Activated CD4-positive, alpha-beta T cell treated with anti-CD3 and anti-CD28 coated beads for 36 hours (primary cell): ENCODE measurements at regions of chr4 and their contacts with region 1.

Region 1: GRCh38 chr4:40662962-40663604 is 33.4 kb upstream of the RBM47 start:
- DNase-seq: peak; percentile 74
- ATAC-seq: peak; percentile 88
- H3K4me3 Mint-ChIP-seq: no peak overlapping the region
- H3K27ac Mint-ChIP-seq: peak overlapping the region; percentile 80
- H3K4me1 Mint-ChIP-seq: peaks cover 27% of the 10 kb centered on the region
- H3K27me3 Mint-ChIP-seq: no peaks in the 10 kb centered on the region

Region 2: GRCh38 chr4:40462326-40462725 is 200.8 kb before region 1 on chr4:
- CTCF ChIA-PET with region 1: no interaction called
- POLR2A ChIA-PET with region 1: no interaction called
- intact Hi-C with region 1: no loop called
- DNase-seq: peak; percentile 27
- ATAC-seq: peak; percentile 43
- H3K4me3 Mint-ChIP-seq: no peak overlapping the region
- H3K27ac Mint-ChIP-seq: no peak overlapping the region
- H3K4me1 Mint-ChIP-seq: peaks cover 14% of the 10 kb centered on the region
- H3K27me3 Mint-ChIP-seq: no peaks in the 10 kb centered on the region

Region 3: GRCh38 chr4:40629401-40630334 is 33.4 kb before region 1 on chr4 and contains the start of gene RBM47:
- CTCF ChIA-PET with region 1: no interaction called
- POLR2A ChIA-PET with region 1: interaction called, 3 read pairs
- intact Hi-C with region 1: loop called in 1 of 2 experiments (anchors 2 kb)
- DNase-seq: peak; percentile 63
- ATAC-seq: peak; percentile 72
- H3K4me3 Mint-ChIP-seq: peak within 1 kb of the TSS; percentile 73
- H3K27ac Mint-ChIP-seq: peak within 1 kb of the TSS; percentile 79
- H3K4me1 Mint-ChIP-seq: peaks cover 36% of the 10 kb centered on the region
- H3K27me3 Mint-ChIP-seq: peaks cover 24% of the 10 kb centered on the region
- total RNA-seq, gene RBM47: 3.2 to 4.4 TPM

Region 4: GRCh38 chr4:40687676-40688389 is 24.8 kb after region 1 on chr4:
- CTCF ChIA-PET with region 1: interaction called, 4 read pairs
- POLR2A ChIA-PET with region 1: interaction called, 4 read pairs
- intact Hi-C with region 1: loop called (anchors 1 kb)
- DNase-seq: no peak
- ATAC-seq: peak; percentile 18
- H3K4me3 Mint-ChIP-seq: no peak overlapping the region
- H3K27ac Mint-ChIP-seq: peak overlapping the region; percentile 91
- H3K4me1 Mint-ChIP-seq: peaks cover 15% of the 10 kb centered on the region
- H3K27me3 Mint-ChIP-seq: peaks cover 1% of the 10 kb centered on the region

Region 5: GRCh38 chr4:40763228-40763716 is 100.2 kb after region 1 on chr4:
- CTCF ChIA-PET with region 1: no interaction called
- POLR2A ChIA-PET with region 1: no interaction called
- intact Hi-C with region 1: loop called in 1 of 2 experiments (anchors 1 kb)
- DNase-seq: peak; percentile 76
- ATAC-seq: peak; percentile 93
- H3K4me3 Mint-ChIP-seq: no peak overlapping the region
- H3K27ac Mint-ChIP-seq: peak overlapping the region; percentile 47
- H3K4me1 Mint-ChIP-seq: peaks cover 12% of the 10 kb centered on the region
- H3K27me3 Mint-ChIP-seq: peaks cover 1% of the 10 kb centered on the region